ENCODE measurements at regions of chr3 and their contacts with region 1.

Region 1: GRCh38 chr3:14431892-14432834 is 29.8 kb downstream of the SLC6A6 start:
- DNase-seq: peak in 9 of 10 donors; percentile 66 to 97 (median 87)
- H3K4me3 ChIP-seq: peak overlapping the region in 7 of 59 donors; percentile 7 to 31 (median 15)
- H3K27ac ChIP-seq: peak overlapping the region; percentile 35 to 96 (median 88)
- H3K27me3 ChIP-seq: no peaks in the 10 kb centered on the region
- CTCF ChIP-seq: peak in 4 of 56 donors; percentile 8 to 23 (median 14)

Region 2: DNA sequence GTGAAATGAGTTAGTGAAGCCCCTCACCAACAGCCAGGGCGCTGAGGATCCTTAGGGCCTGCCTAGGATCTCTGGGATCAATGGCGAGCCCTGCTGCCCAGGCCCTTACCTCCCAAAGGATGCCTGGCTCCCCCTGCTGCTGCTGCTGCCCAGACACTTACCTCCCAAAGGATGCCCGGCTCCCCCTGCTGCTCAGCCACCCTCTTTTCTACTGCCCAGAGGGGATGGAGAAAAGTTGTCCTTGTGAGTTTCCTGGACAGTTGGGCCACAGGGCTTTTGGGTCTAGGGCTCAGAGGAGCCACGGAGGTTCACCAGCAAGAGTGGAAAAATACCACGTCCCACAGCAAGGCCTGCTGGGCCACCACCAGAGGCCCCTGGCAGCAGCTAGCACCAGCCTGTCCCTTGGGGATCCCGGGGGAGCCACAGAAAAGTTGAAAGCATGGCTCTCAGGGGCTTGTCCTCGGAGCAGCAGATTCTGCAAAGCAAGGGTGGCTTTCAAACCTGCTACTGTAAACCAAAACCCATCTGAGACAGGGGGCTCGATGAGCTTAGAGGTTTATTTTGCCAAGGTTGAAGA is 29.7 kb after region 1 on chr3:
- intact Hi-C with region 1: loop called (anchors 1 to 2 kb)
- DNase-seq: peak in 8 of 10 donors; percentile 45 to 72 (median 60)
- H3K4me3 ChIP-seq: no peak overlapping the region
- H3K27ac ChIP-seq: peak overlapping the region in 22 of 59 donors; percentile 13 to 88 (median 76)
- H3K27me3 ChIP-seq: no peaks in the 10 kb centered on the region
- CTCF ChIP-seq: peak in 53 of 56 donors; percentile 33 to 73 (median 59)

Region 3: DNA sequence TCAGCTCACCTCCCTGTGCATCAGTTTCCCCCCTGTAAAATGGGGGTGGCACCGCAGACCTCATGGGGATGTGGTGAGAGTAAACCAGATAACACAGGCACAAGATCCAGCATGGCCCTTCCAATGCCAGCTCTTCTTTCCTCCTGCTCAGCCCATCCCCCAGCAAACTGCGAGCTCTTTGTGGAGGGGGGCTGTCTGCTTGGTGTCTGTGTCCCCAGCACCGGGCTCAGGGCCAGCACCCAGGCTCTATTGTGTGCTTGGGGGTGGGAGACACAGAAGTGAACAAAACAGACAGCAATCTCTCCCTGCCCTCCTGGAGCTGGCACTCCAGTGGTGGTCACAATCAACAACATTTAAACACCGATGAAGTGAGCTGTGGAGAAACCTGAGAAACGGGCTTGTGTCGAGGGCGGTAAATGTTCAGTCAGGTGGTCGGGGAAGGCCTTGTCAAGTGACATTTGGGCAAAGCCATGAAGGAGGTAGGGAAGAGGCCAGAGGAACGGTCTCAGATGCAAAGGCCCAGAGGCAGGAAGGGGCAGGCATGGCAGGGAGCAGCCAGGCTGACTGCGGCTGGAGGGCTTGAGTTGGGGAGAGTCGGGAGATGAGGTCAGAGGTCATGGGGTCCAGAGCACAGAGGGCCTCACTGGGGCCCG is 79.6 kb after region 1 on chr3:
- intact Hi-C with region 1: no loop called
- DNase-seq: peak in 2 of 10 donors; percentile 21 to 29
- H3K4me3 ChIP-seq: no peak overlapping the region
- H3K27ac ChIP-seq: no peak overlapping the region
- H3K27me3 ChIP-seq: no peaks in the 10 kb centered on the region
- CTCF ChIP-seq: no peak

Measured in dorsolateral prefrontal cortex (tissue), 120 donors.